ENCODE measurements at regions of chr2 and their contacts with region 1.

Region 1: GRCh38 chr2:230219419-230220331 is at the start of gene SP110:
- DNase-seq: peak; percentile 90
- H3K4me3 Mint-ChIP-seq: peak within 1 kb of the TSS; percentile 92
- H3K27ac Mint-ChIP-seq: peak within 1 kb of the TSS; percentile 90
- H3K4me1 Mint-ChIP-seq: peaks cover 69% of the 10 kb centered on the region
- H3K27me3 Mint-ChIP-seq: no peaks in the 10 kb centered on the region
- total RNA-seq, gene SP110: 91.5 to 94.1 TPM

Region 2: GRCh38 chr2:229695946-229696345 is 523.7 kb before region 1 on chr2:
- CTCF ChIA-PET with region 1: no interaction called
- POLR2A ChIA-PET with region 1: no interaction called
- intact Hi-C with region 1: no loop called
- DNase-seq: no peak
- H3K4me3 Mint-ChIP-seq: no peak overlapping the region
- H3K27ac Mint-ChIP-seq: no peak overlapping the region
- H3K4me1 Mint-ChIP-seq: no peaks in the 10 kb centered on the region
- H3K27me3 Mint-ChIP-seq: peaks cover 13% of the 10 kb centered on the region

Region 3: GRCh38 chr2:230262246-230262645 is 42.6 kb after region 1 on chr2:
- CTCF ChIA-PET with region 1: no interaction called
- POLR2A ChIA-PET with region 1: no interaction called
- intact Hi-C with region 1: no loop called
- DNase-seq: no peak
- H3K4me3 Mint-ChIP-seq: peak overlapping the region; percentile 42
- H3K27ac Mint-ChIP-seq: peak overlapping the region; percentile 67
- H3K4me1 Mint-ChIP-seq: peaks cover 64% of the 10 kb centered on the region
- H3K27me3 Mint-ChIP-seq: no peaks in the 10 kb centered on the region

Region 4: GRCh38 chr2:230441227-230441897 is 221.7 kb after region 1 on chr2:
- CTCF ChIA-PET with region 1: no interaction called
- POLR2A ChIA-PET with region 1: no interaction called
- intact Hi-C with region 1: loop called (anchors 10 kb)
- DNase-seq: peak; percentile 71
- H3K4me3 Mint-ChIP-seq: peak overlapping the region; percentile 3
- H3K27ac Mint-ChIP-seq: peak overlapping the region; percentile 77
- H3K4me1 Mint-ChIP-seq: peaks cover 52% of the 10 kb centered on the region
- H3K27me3 Mint-ChIP-seq: no peaks in the 10 kb centered on the region

Measured in activated CD4-positive, alpha-beta memory T cell treated with anti-CD3 and anti-CD28 coated beads for 36 hours (primary cell).